ENCODE measurements at regions of chr1 and their contacts with region 1.

Region 1: GRCh38 chr1:113978863-113979702 is at the start of gene OLFML3:
- DNase-seq: peak; percentile 88
- ATAC-seq: peak; percentile 78
- H3K4me3 ChIP-seq: peak within 1 kb of the TSS; percentile 57
- H3K27ac ChIP-seq: peak within 1 kb of the TSS; percentile 75
- H3K4me1 ChIP-seq: peaks cover 19% of the 10 kb centered on the region
- H3K27me3 ChIP-seq: no peaks in the 10 kb centered on the region
- CTCF ChIP-seq: peak; percentile 83
- total RNA-seq, gene OLFML3: 7.0 TPM in 2 replicates

Region 2: DNA sequence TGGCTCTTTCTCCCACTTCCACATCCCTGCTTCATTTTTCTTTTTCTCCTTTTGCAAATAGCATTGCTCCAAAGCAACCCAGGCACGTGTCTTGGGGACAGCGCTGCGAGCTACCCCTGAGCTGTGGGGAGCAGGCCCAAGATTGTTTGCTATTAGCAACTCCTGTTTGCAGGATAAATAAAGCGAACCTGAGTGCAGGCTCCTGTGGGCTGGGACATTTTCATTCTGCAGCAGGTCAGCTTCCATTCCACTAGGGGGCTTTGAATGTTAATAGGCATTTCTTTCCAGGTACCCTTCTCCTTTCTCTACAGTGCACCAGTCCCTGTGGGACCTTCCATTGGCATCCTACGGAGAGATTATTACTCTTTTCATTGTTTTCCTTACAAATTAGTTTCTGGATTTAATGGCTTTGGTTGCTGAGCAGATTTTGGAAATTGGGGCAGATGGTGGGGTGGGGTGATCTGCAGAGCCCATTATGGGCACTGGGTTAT is 54.2 kb after region 1 on chr1:
- CTCF ChIA-PET with region 1: interaction called, 8 read pairs
- POLR2A ChIA-PET with region 1: no interaction called
- intact Hi-C with region 1: loop called (anchors 1 kb)
- DNase-seq: peak; percentile 88
- ATAC-seq: peak; percentile 86
- H3K4me3 ChIP-seq: peak overlapping the region; percentile 50
- H3K27ac ChIP-seq: peak overlapping the region; percentile 90
- H3K4me1 ChIP-seq: peaks cover 38% of the 10 kb centered on the region
- H3K27me3 ChIP-seq: no peaks in the 10 kb centered on the region
- CTCF ChIP-seq: peak; percentile 86

Region 3: GRCh38 chr1:114114185-114115094 is 135.4 kb after region 1 on chr1:
- CTCF ChIA-PET with region 1: no interaction called
- POLR2A ChIA-PET with region 1: no interaction called
- intact Hi-C with region 1: no loop called
- DNase-seq: peak; percentile 90
- ATAC-seq: peak; percentile 95
- H3K4me3 ChIP-seq: no peak overlapping the region
- H3K27ac ChIP-seq: peak overlapping the region; percentile 77
- H3K4me1 ChIP-seq: peaks cover 18% of the 10 kb centered on the region
- H3K27me3 ChIP-seq: no peaks in the 10 kb centered on the region
- CTCF ChIP-seq: no peak

Region 4: DNA sequence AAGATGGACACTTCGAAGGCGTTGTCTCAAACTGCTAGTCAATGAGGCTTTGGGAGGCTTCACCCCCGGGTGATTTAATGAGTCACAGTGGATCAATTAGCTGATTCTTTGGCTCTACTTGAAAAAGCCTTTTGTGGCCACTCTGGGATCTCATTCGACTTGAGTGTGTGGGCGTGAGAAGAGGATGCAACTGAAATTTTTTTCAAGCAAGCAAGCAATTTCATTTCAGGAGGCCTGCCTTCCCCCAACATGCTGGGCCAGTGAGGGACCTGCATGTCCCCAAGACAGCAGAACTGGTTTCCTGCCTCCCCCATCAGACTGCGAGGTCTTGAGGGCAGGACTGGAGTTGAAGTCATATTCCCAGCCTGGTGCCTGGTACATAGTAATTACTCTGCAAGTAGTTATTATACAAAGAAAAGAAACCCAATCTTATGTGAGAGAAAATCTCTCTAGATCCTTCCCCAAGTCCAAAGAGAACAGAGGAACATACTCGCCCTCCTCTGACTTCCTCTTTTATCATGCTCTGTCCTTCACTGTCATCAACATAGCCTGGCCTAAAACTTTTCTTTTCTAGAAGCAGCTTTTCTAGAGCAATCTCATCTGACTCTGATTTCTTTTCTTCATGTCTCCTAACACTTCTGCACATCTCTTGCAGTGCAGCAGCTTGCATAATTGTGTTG is 151.9 kb after region 1 on chr1:
- CTCF ChIA-PET with region 1: interaction called, 3 read pairs
- POLR2A ChIA-PET with region 1: no interaction called
- intact Hi-C with region 1: loop called (anchors 5 kb)
- DNase-seq: no peak
- ATAC-seq: no peak
- H3K4me3 ChIP-seq: no peak overlapping the region
- H3K27ac ChIP-seq: no peak overlapping the region
- H3K4me1 ChIP-seq: peaks cover 8% of the 10 kb centered on the region; the same call in 1 of the 2 replicates
- H3K27me3 ChIP-seq: no peaks in the 10 kb centered on the region
- CTCF ChIP-seq: no peak

Region 5: GRCh38 chr1:114282751-114283403 is 303.8 kb after region 1 on chr1:
- CTCF ChIA-PET with region 1: interaction called, 14 read pairs
- POLR2A ChIA-PET with region 1: no interaction called
- intact Hi-C with region 1: loop called (anchors 1 kb)
- DNase-seq: peak; percentile 88
- ATAC-seq: peak; percentile 100
- H3K4me3 ChIP-seq: no peak overlapping the region
- H3K27ac ChIP-seq: no peak overlapping the region
- H3K4me1 ChIP-seq: no peaks in the 10 kb centered on the region
- H3K27me3 ChIP-seq: peaks cover 24% of the 10 kb centered on the region
- CTCF ChIP-seq: peak; percentile 91

Region 6: DNA sequence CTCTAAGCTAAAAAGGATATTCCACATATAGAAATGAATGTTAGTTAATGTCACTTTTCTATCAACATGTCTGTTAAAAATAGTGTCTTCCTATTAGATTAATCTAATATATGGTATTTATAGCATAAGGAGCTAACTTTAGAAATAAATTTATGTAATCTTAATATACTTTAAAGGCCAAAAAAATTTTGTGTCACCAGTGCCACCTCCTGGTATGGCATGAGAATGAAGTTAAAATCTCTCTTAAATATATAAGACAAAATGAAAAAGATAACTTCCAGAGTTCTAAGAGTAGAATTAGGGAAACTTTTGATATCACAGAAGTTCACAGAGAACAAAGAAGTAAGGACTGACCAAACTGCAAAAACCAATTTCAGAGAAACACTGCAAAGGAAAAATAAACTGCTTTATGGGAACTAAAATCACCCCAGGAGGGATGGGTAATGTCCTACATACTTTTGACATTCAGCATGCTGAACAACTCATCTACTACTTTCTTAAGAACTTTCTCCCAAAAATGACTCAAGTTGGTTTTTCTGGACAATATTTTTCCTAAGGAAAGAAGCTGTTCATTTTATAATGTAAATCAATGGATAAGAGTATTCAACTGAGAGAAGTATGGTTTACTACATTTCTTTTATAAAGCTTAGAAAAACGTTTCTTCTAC is 449.1 kb after region 1 on chr1:
- CTCF ChIA-PET with region 1: no interaction called
- POLR2A ChIA-PET with region 1: no interaction called
- intact Hi-C with region 1: loop called (anchors 1 kb)
- DNase-seq: peak; percentile 38
- ATAC-seq: no peak; the same call in 1 of the 2 replicates
- H3K4me3 ChIP-seq: no peak overlapping the region
- H3K27ac ChIP-seq: no peak overlapping the region
- H3K4me1 ChIP-seq: no peaks in the 10 kb centered on the region
- H3K27me3 ChIP-seq: no peaks in the 10 kb centered on the region
- CTCF ChIP-seq: peak; percentile 65

Measured in PC-3 (cell line).